ENCODE measurements at regions of chr5 and their contacts with region 1.

Region 1: DNA sequence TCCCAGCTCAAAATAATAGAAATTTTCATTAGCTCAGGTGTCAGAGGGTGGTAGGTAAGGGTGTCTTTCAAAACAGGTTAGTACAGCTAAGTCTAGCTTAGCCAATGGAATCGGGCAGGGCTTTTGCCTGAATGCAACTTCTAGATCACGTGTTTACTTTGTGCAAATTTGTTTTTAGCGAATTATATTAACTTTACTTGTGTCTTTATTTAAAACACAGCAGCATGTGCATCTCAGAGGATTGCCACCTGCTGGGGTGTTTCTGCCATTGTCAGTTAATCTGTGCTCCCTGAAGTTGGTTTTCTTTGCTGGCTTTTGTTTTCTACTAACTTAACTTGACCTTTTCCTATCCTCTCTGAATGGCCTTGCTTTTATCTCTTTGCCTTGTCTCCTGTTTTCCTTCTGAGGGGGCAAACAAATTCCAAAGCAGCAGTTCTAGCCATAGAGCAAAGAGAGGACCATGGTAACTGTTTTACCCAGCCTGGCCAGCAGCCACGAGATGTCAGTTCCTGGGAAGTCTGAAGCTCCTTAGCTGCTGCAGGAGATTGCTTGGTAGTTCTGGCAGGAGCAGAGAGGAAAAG is 67.6 kb downstream of the ARHGEF28 start:
- DNase-seq: no peak
- H3K4me3 ChIP-seq: no peak overlapping the region
- H3K27ac ChIP-seq: no peak overlapping the region
- H3K4me1 ChIP-seq: peaks cover 0 to 18% (median 1%) of the 10 kb centered on the region in 4 donors
- H3K27me3 ChIP-seq: no peaks in the 10 kb centered on the region
- CTCF ChIP-seq: peak; percentile 17 to 40

Region 2: DNA sequence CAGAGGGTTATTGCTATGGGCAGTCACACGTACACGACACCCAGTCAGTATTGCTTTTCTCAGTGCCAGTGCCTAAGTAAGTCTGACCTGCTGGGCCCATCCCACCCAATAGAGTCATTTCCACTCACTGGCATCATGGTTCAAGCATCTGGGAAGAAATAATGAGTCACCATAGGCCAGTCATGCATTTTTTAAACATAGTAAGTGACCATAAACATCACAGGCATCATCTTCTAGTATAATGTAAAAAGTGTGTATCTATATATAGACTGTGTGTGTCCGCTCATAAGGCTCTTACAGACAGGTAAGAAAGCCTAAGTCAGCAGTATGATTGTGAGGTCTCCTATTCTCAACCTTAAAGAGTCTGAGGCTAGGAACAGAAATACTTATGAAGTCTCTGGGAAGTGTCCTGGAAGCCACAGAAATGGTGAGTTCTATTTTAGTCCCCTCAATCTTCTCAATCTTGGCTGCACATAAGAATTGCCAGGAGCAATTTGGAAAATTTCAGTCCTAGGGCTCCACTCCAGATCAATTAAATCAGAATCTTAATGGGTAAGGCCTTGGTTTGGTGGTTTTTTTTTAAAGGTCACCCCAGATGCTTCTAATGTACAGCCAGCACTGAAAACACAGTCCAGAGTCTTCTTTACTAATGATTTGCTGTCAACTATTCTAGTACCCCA is 1251.6 kb before region 1 on chr5:
- intact Hi-C with region 1: no loop called
- DNase-seq: no peak
- H3K4me3 ChIP-seq: no peak overlapping the region
- H3K27ac ChIP-seq: peak overlapping the region; percentile 88 to 91
- H3K4me1 ChIP-seq: peaks cover 0 to 81% (median 46%) of the 10 kb centered on the region in 4 donors
- H3K27me3 ChIP-seq: no peaks in the 10 kb centered on the region
- CTCF ChIP-seq: no peak

Region 3: GRCh38 chr5:73666891-73667290 is 26.7 kb before region 1 on chr5:
- intact Hi-C with region 1: loop called (anchors 2 kb)
- DNase-seq: no peak
- H3K4me3 ChIP-seq: no peak overlapping the region
- H3K27ac ChIP-seq: no peak overlapping the region
- H3K4me1 ChIP-seq: no peaks in the 10 kb centered on the region
- H3K27me3 ChIP-seq: no peaks in the 10 kb centered on the region
- CTCF ChIP-seq: no peak

Region 4: GRCh38 chr5:73733219-73733618 is 39.6 kb after region 1 on chr5:
- intact Hi-C with region 1: no loop called
- DNase-seq: no peak
- H3K4me3 ChIP-seq: no peak overlapping the region
- H3K27ac ChIP-seq: no peak overlapping the region
- H3K4me1 ChIP-seq: peaks cover 0 to 21% (median 4%) of the 10 kb centered on the region in 4 donors
- H3K27me3 ChIP-seq: no peaks in the 10 kb centered on the region
- CTCF ChIP-seq: no peak

Measured in tibial artery (tissue), 4 donors.